ENCODE measurements at regions of chr7 and their contacts with region 1.

Region 1: GRCh38 chr7:136114966-136115762 is 138.0 kb upstream of the MTPN start:
- DNase-seq: peak; percentile 73
- H3K4me3 Mint-ChIP-seq: no peak overlapping the region
- H3K27ac Mint-ChIP-seq: no peak overlapping the region
- H3K4me1 Mint-ChIP-seq: peaks cover 4% of the 10 kb centered on the region
- H3K27me3 Mint-ChIP-seq: no peaks in the 10 kb centered on the region

Region 2: GRCh38 chr7:136104269-136104603 is 10.9 kb before region 1 on chr7:
- CTCF ChIA-PET with region 1: interaction called, 13 read pairs
- POLR2A ChIA-PET with region 1: interaction called, 3 read pairs
- intact Hi-C with region 1: no loop called
- DNase-seq: no peak
- H3K4me3 Mint-ChIP-seq: no peak overlapping the region
- H3K27ac Mint-ChIP-seq: no peak overlapping the region
- H3K4me1 Mint-ChIP-seq: no peaks in the 10 kb centered on the region
- H3K27me3 Mint-ChIP-seq: no peaks in the 10 kb centered on the region

Region 3: GRCh38 chr7:136130819-136131643 is 15.9 kb after region 1 on chr7:
- CTCF ChIA-PET with region 1: interaction called, 12 read pairs
- POLR2A ChIA-PET with region 1: no interaction called
- intact Hi-C with region 1: no loop called
- DNase-seq: no peak
- H3K4me3 Mint-ChIP-seq: no peak overlapping the region
- H3K27ac Mint-ChIP-seq: peak overlapping the region; percentile 44
- H3K4me1 Mint-ChIP-seq: peaks cover 14% of the 10 kb centered on the region
- H3K27me3 Mint-ChIP-seq: no peaks in the 10 kb centered on the region

Region 4: DNA sequence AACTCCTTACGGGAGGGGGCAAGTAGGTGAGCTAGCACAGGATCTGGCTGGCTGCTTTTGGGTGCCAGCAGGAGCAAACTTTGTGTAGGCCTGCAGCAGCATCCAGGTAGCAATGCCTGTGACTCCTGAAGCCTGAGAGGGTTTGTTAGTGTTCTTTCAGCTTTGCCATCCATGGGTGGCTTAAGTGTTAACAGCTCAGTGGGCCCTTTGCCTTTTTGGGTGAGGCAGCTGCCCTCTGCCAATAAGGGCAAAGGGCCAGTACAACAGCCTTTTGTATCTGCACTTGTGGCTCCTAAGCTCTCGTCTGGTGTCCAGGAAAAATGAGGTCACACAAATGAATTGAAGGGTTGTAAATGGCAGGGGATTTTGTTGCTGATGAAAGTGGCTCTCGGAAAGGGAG is 394.3 kb after region 1 on chr7:
- CTCF ChIA-PET with region 1: no interaction called
- POLR2A ChIA-PET with region 1: no interaction called
- intact Hi-C with region 1: no loop called
- DNase-seq: no peak
- H3K4me3 Mint-ChIP-seq: no peak overlapping the region
- H3K27ac Mint-ChIP-seq: no peak overlapping the region
- H3K4me1 Mint-ChIP-seq: no peaks in the 10 kb centered on the region
- H3K27me3 Mint-ChIP-seq: no peaks in the 10 kb centered on the region

Region 5: DNA sequence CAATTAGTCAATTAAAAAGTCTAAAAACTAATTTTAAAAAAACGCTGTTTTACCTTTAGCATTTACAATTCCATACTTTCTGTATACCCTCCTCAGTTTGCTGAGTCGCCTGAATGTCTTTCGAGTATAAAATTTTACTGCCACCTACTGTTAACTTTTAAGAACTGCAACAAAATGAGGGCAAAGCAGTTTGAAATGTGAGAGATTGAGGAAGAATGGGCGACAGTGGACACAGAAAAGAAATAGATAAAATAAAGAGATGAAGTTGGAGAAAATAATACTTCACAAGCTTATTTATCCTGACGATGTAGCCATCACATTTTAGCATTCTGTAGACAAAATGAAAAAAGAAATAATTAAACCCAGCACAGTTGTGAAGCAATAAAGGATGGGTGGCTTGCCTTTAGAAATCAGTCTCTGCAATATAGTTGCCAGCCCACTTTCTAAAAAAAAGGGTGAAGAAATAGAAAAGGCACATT is 1339.1 kb after region 1 on chr7:
- CTCF ChIA-PET with region 1: interaction called, 4 read pairs
- POLR2A ChIA-PET with region 1: no interaction called
- intact Hi-C with region 1: loop called (anchors 5 kb)
- DNase-seq: no peak
- H3K4me3 Mint-ChIP-seq: no peak overlapping the region
- H3K27ac Mint-ChIP-seq: no peak overlapping the region
- H3K4me1 Mint-ChIP-seq: no peaks in the 10 kb centered on the region
- H3K27me3 Mint-ChIP-seq: no peaks in the 10 kb centered on the region